AG04450 (cell line): ENCODE measurements at regions of chr1 and their contacts with region 1.

Region 1: GRCh38 chr1:46527474-46528296 is 23.8 kb downstream of the KNCN start:
- DNase-seq: no peak
- H3K4me3 ChIP-seq: no peak overlapping the region
- H3K27ac ChIP-seq: no peak overlapping the region
- H3K27me3 ChIP-seq: peaks cover 63% of the 10 kb centered on the region
- CTCF ChIP-seq: peak; percentile 92

Region 2: DNA sequence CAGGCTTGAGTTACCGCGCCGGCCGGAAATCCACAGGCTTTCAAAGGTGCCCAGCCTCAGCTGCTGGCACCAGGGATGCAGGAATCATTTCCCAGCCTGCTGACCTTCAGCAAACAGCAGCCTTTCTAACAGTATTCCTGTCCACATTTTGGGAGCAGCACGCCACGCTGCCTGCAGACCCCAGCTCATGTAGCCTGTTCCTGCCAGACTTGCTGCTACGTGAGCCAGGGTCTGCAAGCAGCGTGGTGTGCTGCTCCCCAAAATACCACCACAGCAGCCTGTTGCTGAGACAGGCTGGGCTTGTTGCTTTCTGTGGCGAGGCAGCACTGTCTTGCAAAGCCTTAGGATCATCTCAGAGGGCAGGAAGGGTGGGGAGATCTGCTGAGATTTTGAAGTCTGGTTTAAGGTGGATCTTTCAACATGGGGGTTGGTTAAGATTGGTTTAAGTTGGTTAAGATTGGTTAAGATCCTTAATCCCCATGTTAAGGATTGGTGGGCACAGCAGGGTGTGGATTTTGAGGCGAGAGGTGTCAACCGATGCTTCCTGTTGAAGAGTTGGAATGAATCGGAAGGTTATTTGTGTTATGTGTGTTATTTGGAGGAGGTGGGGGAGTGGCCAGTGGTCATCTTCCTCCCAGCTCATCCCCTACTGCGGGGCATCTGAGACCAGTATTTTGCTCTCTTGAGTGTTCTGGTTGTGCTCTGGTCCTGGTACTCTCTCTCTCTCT is 120.6 kb before region 1 on chr1:
- CTCF ChIA-PET with region 1: interaction called, 22 read pairs
- POLR2A ChIA-PET with region 1: interaction called, 8 read pairs
- DNase-seq: no peak
- H3K4me3 ChIP-seq: 0 out of 2 replicates have a peak overlapping the region, but pooled peaks have one; percentile 17
- H3K27ac ChIP-seq: no peak overlapping the region
- H3K27me3 ChIP-seq: peaks cover 16% of the 10 kb centered on the region
- CTCF ChIP-seq: no peak

Region 3: GRCh38 chr1:46477153-46477929 is 50.3 kb before region 1 on chr1:
- CTCF ChIA-PET with region 1: interaction called, 111 read pairs
- POLR2A ChIA-PET with region 1: no interaction called
- DNase-seq: peak; percentile 24
- H3K4me3 ChIP-seq: no peak overlapping the region
- H3K27ac ChIP-seq: no peak overlapping the region
- H3K27me3 ChIP-seq: peaks cover 82% of the 10 kb centered on the region
- CTCF ChIP-seq: peak; percentile 90

Region 4: GRCh38 chr1:46538147-46538546 is 10.5 kb after region 1 on chr1:
- CTCF ChIA-PET with region 1: interaction called, 14 read pairs
- POLR2A ChIA-PET with region 1: no interaction called
- DNase-seq: no peak
- H3K4me3 ChIP-seq: no peak overlapping the region
- H3K27ac ChIP-seq: no peak overlapping the region
- H3K27me3 ChIP-seq: peaks cover 45% of the 10 kb centered on the region
- CTCF ChIP-seq: no peak

Region 5: GRCh38 chr1:46580140-46580903 is 52.6 kb after region 1 on chr1:
- CTCF ChIA-PET with region 1: interaction called, 11 read pairs
- POLR2A ChIA-PET with region 1: no interaction called
- DNase-seq: no peak
- H3K4me3 ChIP-seq: no peak overlapping the region
- H3K27ac ChIP-seq: no peak overlapping the region
- H3K27me3 ChIP-seq: no peaks in the 10 kb centered on the region
- CTCF ChIP-seq: no peak

Region 6: DNA sequence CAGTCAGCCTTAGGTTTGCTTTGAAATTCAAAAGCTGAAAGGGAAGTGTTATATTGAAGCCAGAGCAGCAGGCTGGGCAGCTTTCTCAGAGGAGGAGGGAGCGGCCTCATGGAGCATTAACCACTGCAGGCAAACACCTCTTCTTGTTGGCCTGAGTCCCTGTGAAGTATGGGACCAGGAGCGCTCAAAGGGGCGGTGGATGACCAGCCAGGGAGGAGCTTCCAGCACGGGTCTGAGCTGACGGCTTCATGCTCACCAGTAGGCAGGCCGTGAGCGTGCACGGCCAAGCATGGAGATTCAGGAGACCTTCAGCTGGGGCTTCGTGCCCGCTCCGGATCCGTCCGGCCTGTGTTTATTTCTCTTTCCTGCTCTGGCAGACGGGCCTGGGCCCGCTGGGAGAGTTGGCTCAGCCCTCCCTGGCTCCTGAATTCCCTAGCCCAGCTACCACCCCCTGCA is 1224.3 kb after region 1 on chr1:
- CTCF ChIA-PET with region 1: interaction called, 13 read pairs
- POLR2A ChIA-PET with region 1: no interaction called
- DNase-seq: no peak
- H3K4me3 ChIP-seq: no peak overlapping the region
- H3K27ac ChIP-seq: no peak overlapping the region
- H3K27me3 ChIP-seq: no peaks in the 10 kb centered on the region
- CTCF ChIP-seq: no peak